MCF 10A (cell line): ENCODE measurements at regions of chr11 and their contacts with region 1.

Region 1: DNA sequence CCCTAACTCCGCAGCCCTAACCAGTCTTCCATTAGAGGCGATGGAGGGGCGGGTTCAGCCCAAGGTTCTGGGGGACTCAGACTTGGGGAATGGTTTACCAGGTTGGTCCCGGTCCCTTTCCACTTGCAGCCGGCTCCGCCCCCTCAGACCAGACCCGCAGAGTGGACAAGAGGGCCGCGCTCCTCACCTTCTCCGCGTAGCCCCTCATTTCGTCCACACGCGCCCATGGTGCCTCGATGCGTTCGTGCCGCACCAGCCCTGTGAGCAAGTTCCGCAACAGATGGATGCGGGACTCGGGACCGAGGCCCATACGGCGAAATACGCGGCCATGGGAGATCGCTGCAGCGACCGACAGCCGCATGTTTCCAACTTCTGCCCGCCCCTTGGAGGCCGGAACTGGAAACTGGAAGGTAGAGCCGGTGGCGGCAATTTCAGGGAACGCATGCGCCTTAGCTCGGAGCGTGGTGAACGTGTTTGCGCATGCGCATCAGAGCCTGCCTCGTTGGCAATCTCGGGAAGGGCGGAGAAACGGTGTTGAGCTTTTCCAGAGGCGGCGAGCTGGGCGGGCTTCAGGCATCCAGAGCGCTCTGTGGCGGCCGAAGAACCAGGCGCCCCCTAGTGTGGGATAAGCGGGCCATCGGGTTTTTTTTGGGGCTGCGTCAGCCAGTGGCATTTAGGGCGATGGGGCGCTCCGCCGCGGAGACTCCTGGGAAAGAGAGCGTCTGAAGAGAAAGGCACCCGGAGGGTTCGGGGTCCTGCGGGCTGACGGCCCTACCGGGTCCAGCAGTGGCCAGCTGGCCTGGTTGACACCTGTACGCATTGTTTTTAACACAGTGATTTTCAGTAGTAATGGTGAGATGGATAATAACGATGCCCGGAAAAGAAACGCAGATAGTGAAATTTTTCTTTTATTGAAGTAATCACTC is at the start of gene MRPL17:
- DNase-seq: peak; percentile 99
- H3K4me3 Mint-ChIP-seq: peak within 1 kb of the TSS; percentile 100
- H3K27ac Mint-ChIP-seq: peak within 1 kb of the TSS; percentile 95
- H3K4me1 Mint-ChIP-seq: peaks cover 12% of the 10 kb centered on the region
- H3K27me3 Mint-ChIP-seq: no peaks in the 10 kb centered on the region
- CTCF ChIP-seq: peak; percentile 75
- total RNA-seq, gene MRPL17: 78.0 and 88.4 TPM in 2 replicates

Region 2: GRCh38 chr11:6603287-6604080 is 79.7 kb before region 1 on chr11 and contains the starts of genes ILK and RRP8:
- CTCF ChIA-PET with region 1: interaction called, 34 read pairs
- POLR2A ChIA-PET with region 1: interaction called, 40 read pairs
- intact Hi-C with region 1: loop called (anchors 1 kb)
- DNase-seq: peak; percentile 90
- H3K4me3 Mint-ChIP-seq: no peak within 1 kb of the TSS
- H3K27ac Mint-ChIP-seq: no peak within 1 kb of the TSS
- H3K4me1 Mint-ChIP-seq: peaks cover 22% of the 10 kb centered on the region
- H3K27me3 Mint-ChIP-seq: no peaks in the 10 kb centered on the region
- CTCF ChIP-seq: no peak
- total RNA-seq, gene ILK: 78.9 and 92.3 TPM in 2 replicates
- total RNA-seq, gene RRP8: 23.4 and 27.6 TPM in 2 replicates

Region 3: DNA sequence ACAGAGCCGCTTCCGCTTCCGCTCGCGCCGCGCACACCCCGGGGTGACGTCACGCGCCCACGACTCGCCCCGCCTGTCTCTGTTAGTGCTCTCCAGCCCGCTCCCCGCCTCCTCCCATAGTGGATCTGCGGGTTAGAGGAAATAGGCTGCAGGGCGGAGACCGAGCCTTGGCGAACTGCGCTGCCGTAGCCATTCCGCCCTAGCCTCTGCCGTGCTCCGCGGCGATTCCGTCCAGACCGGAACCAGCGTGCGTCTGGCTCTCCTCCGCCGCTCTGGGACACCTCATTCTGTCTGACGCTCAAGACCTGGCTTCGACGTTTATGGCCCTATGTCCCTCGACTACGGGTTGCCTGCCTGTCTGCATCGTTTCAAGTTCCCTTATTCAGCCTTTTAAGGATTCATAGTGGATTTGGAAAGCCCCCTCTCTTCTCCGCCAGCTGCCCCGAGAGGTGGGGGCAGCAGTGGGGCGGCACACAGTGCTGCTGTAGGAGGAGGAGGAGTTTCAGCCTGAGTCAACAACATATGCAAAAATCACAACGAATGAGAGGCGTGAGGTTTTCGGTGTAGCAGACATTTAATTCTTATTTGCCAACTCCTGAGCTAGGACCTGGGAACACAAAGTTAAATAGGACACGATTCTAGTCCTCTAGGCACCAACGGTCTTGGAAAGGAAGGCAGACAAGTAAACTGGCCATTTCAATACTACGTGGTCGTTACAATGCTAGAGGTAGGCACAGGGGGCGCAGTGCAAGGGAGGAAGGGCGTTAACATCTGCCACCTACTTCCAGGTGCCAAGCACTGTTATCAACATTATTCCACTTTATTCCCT is 70.8 kb before region 1 on chr11 and contains the start of gene TAF10:
- CTCF ChIA-PET with region 1: interaction called, 8 read pairs
- POLR2A ChIA-PET with region 1: interaction called, 54 read pairs
- intact Hi-C with region 1: loop called (anchors 1 kb)
- DNase-seq: peak; percentile 96
- H3K4me3 Mint-ChIP-seq: no peak within 1 kb of the TSS
- H3K27ac Mint-ChIP-seq: no peak within 1 kb of the TSS
- H3K4me1 Mint-ChIP-seq: peaks cover 9% of the 10 kb centered on the region
- H3K27me3 Mint-ChIP-seq: no peaks in the 10 kb centered on the region
- CTCF ChIP-seq: peak; percentile 18
- total RNA-seq, gene TAF10: 157 and 167 TPM in 2 replicates

Region 4: DNA sequence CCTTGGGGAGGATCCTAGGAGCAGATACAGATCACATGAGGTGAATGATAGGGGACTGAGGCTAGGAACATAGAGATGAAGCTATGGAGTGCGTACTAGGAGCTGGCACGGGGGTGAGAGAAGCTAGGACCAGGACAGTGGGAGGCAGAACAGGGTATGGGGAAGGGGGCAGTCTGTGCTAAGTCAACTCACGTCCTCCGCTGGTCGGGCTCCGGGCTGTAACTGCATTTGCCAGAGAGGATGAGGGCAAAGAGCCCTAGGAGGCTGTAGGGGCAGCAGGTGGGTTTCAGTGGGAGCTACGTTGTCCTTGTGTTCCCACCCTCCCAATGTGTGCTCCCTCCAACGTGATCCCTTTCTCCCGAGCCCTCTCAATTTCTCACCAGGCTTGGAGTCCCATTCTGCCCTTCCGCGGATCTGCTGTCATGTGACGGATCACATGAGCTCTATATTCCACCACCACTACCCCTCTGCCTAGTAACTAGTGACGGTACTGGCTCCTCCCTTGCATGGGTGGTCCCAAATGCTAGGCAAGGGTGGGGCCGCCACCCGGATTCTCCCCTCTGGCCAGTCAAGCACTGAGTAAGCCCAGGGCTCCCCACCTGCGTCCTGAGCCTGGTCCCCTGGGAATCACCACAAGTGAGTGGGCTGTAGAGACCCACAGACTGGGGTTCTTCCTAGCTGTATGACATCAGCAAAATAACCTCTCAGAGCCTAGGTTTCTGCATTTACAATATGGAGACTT is 64.0 kb before region 1 on chr11 and contains the start of gene TPP1:
- CTCF ChIA-PET with region 1: interaction called, 34 read pairs
- POLR2A ChIA-PET with region 1: interaction called, 56 read pairs
- intact Hi-C with region 1: no loop called
- DNase-seq: peak; percentile 96
- H3K4me3 Mint-ChIP-seq: no peak within 1 kb of the TSS
- H3K27ac Mint-ChIP-seq: no peak within 1 kb of the TSS
- H3K4me1 Mint-ChIP-seq: no peaks in the 10 kb centered on the region
- H3K27me3 Mint-ChIP-seq: no peaks in the 10 kb centered on the region
- CTCF ChIP-seq: no peak
- total RNA-seq, gene TPP1: 26.9 and 46.5 TPM in 2 replicates

Region 5: GRCh38 chr11:6637871-6638270 is 45.3 kb before region 1 on chr11:
- CTCF ChIA-PET with region 1: no interaction called
- POLR2A ChIA-PET with region 1: no interaction called
- intact Hi-C with region 1: no loop called
- DNase-seq: peak; percentile 29
- H3K4me3 Mint-ChIP-seq: no peak overlapping the region
- H3K27ac Mint-ChIP-seq: no peak overlapping the region
- H3K4me1 Mint-ChIP-seq: no peaks in the 10 kb centered on the region
- H3K27me3 Mint-ChIP-seq: no peaks in the 10 kb centered on the region
- CTCF ChIP-seq: no peak

Region 6: GRCh38 chr11:6693342-6694228 is 10.4 kb after region 1 on chr11:
- CTCF ChIA-PET with region 1: interaction called, 11 read pairs
- POLR2A ChIA-PET with region 1: no interaction called
- intact Hi-C with region 1: no loop called
- DNase-seq: peak; percentile 61
- H3K4me3 Mint-ChIP-seq: no peak overlapping the region
- H3K27ac Mint-ChIP-seq: peak overlapping the region; percentile 64
- H3K4me1 Mint-ChIP-seq: peaks cover 16% of the 10 kb centered on the region
- H3K27me3 Mint-ChIP-seq: no peaks in the 10 kb centered on the region
- CTCF ChIP-seq: no peak